MCF 10A (cell line): ENCODE measurements at regions of chr12 and their contacts with region 1.

Region 1: GRCh38 chr12:53746592-53747092 is 5.1 kb downstream of the CISTR start:
- DNase-seq: peak; percentile 83
- H3K4me3 Mint-ChIP-seq: no peak overlapping the region
- H3K27ac Mint-ChIP-seq: no peak overlapping the region
- H3K4me1 Mint-ChIP-seq: no peaks in the 10 kb centered on the region
- H3K27me3 Mint-ChIP-seq: no peaks in the 10 kb centered on the region
- CTCF ChIP-seq: peak; percentile 99

Region 2: DNA sequence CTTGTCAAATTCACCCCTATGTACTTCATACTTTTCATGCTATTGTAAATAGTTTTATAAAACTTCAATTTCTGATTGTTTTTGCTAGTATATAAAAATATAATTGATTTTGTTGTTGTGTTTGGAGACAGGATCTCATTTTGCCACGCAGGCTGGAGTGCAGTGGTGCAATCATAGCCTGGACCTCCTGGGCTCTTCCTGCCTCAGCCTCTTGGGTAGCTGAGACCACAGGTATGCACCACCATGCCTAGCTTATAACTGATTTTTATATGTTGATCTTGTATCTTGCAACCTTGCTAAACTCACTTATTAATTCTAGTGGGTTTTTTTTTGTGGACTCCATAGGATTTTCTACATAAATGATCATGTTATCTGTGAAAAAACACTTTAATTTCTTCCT is 94.3 kb before region 1 on chr12:
- CTCF ChIA-PET with region 1: no interaction called
- POLR2A ChIA-PET with region 1: no interaction called
- intact Hi-C with region 1: no loop called
- DNase-seq: no peak
- H3K4me3 Mint-ChIP-seq: no peak overlapping the region
- H3K27ac Mint-ChIP-seq: no peak overlapping the region
- H3K4me1 Mint-ChIP-seq: no peaks in the 10 kb centered on the region
- H3K27me3 Mint-ChIP-seq: no peaks in the 10 kb centered on the region
- CTCF ChIP-seq: no peak

Region 3: GRCh38 chr12:53686436-53686835 is 60.2 kb before region 1 on chr12:
- CTCF ChIA-PET with region 1: interaction called, 98 read pairs
- POLR2A ChIA-PET with region 1: interaction called, 4 read pairs
- intact Hi-C with region 1: no loop called
- DNase-seq: no peak
- H3K4me3 Mint-ChIP-seq: no peak overlapping the region
- H3K27ac Mint-ChIP-seq: no peak overlapping the region
- H3K4me1 Mint-ChIP-seq: no peaks in the 10 kb centered on the region
- H3K27me3 Mint-ChIP-seq: no peaks in the 10 kb centered on the region
- CTCF ChIP-seq: no peak

Region 4: DNA sequence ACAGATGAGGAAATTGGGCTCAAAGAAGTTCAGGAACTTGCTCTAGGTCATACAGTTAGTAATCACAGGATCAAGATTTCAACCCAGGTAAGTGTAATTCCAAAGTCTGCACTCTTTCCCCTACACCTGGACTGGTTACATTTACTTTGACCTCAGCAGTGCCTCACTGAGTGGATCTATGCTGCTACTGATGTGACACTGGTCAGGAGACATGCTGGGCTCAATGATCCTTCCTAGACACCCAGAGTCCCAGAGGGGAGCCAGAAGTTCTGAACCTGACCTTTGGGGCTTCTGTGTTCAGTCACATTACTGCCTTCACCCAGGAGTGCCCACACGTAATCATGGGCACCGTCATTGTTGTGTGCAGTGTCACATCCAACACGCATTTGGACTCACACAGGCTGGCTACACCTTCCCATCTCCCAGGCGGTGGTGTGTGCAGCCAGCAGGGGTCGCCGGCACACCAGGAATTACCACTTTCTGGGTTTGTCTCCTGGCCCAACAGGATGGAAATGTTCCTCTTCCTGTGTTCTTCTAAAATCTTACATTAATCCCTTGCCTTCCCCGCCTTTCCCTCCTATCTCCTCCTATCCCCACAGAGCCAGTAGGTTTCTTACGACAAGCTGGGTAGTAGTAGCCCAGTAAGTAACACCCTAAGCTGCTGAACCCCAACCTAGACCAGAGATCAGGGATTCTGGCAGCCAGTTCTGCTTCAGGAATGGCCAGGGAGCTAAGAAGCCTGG is 45.0 kb before region 1 on chr12:
- CTCF ChIA-PET with region 1: interaction called, 339 read pairs
- POLR2A ChIA-PET with region 1: interaction called, 6 read pairs
- intact Hi-C with region 1: loop called (anchors 1 kb)
- DNase-seq: peak; percentile 82
- H3K4me3 Mint-ChIP-seq: no peak overlapping the region
- H3K27ac Mint-ChIP-seq: no peak overlapping the region
- H3K4me1 Mint-ChIP-seq: peaks cover 5% of the 10 kb centered on the region
- H3K27me3 Mint-ChIP-seq: peaks cover 80% of the 10 kb centered on the region
- CTCF ChIP-seq: peak; percentile 95

Region 5: DNA sequence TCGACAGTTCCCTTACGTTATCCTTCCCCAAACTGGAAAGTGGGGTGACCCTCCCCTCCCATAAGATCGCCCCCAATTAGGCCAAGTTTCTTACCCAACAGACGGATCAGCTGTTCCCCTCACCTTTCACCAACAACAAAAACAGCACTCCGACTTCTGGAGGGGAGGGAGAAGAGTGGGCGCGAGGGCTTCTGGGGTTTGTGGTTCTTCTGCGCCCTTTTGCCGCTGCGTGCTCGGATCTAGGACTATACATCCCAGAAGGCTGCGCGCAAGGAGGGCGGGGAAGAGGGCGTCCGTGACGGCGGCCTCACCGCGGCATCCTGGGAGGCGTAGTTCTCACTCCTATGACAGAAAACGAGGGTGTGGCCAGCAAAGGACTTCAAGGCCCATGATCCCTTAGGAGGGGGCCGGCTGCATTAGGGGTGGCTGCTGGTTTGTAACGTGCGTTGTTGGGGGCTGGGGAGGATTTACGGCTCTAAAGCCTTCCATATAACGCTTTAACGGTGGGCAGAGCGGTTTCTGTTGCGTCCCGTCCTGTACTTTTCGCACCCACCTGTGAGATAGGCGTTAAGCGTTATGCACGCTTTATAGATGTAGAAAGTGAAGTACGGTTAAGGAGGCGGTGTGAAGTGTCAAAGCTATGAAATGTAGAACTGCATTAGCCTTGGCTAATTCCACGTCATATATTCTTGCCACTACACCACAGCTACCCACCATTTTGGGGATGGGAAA is 19.2 kb before region 1 on chr12 and contains the start of gene CALCOCO1:
- CTCF ChIA-PET with region 1: interaction called, 411 read pairs
- POLR2A ChIA-PET with region 1: interaction called, 11 read pairs
- intact Hi-C with region 1: no loop called
- DNase-seq: peak; percentile 98
- H3K4me3 Mint-ChIP-seq: peak within 1 kb of the TSS; percentile 95
- H3K27ac Mint-ChIP-seq: peak within 1 kb of the TSS; percentile 99
- H3K4me1 Mint-ChIP-seq: peaks cover 15% of the 10 kb centered on the region
- H3K27me3 Mint-ChIP-seq: no peaks in the 10 kb centered on the region
- CTCF ChIP-seq: no peak
- total RNA-seq, gene CALCOCO1: 49.4 and 74.6 TPM in 2 replicates

Region 6: GRCh38 chr12:53764615-53765014 is 18.0 kb after region 1 on chr12:
- CTCF ChIA-PET with region 1: interaction called, 28 read pairs
- POLR2A ChIA-PET with region 1: no interaction called
- intact Hi-C with region 1: no loop called
- DNase-seq: no peak
- H3K4me3 Mint-ChIP-seq: no peak overlapping the region
- H3K27ac Mint-ChIP-seq: no peak overlapping the region
- H3K4me1 Mint-ChIP-seq: peaks cover 17% of the 10 kb centered on the region
- H3K27me3 Mint-ChIP-seq: peaks cover 6% of the 10 kb centered on the region
- CTCF ChIP-seq: no peak

Region 7: GRCh38 chr12:53781228-53781801 is 34.7 kb after region 1 on chr12:
- CTCF ChIA-PET with region 1: interaction called, 20 read pairs
- POLR2A ChIA-PET with region 1: no interaction called
- intact Hi-C with region 1: no loop called
- DNase-seq: no peak
- H3K4me3 Mint-ChIP-seq: no peak overlapping the region
- H3K27ac Mint-ChIP-seq: peak overlapping the region; percentile 20
- H3K4me1 Mint-ChIP-seq: peaks cover 14% of the 10 kb centered on the region
- H3K27me3 Mint-ChIP-seq: no peaks in the 10 kb centered on the region
- CTCF ChIP-seq: no peak

Region 8: GRCh38 chr12:53984901-53985709 is 238.5 kb after region 1 on chr12 and contains the start of gene HOXC10:
- CTCF ChIA-PET with region 1: interaction called, 60 read pairs
- POLR2A ChIA-PET with region 1: no interaction called
- intact Hi-C with region 1: no loop called
- DNase-seq: peak; percentile 93
- H3K4me3 Mint-ChIP-seq: no peak within 1 kb of the TSS
- H3K27ac Mint-ChIP-seq: no peak within 1 kb of the TSS
- H3K4me1 Mint-ChIP-seq: peaks cover 20% of the 10 kb centered on the region
- H3K27me3 Mint-ChIP-seq: no peaks in the 10 kb centered on the region
- CTCF ChIP-seq: peak; percentile 64
- total RNA-seq, gene HOXC10: not detected in 2 replicates

Region 9: DNA sequence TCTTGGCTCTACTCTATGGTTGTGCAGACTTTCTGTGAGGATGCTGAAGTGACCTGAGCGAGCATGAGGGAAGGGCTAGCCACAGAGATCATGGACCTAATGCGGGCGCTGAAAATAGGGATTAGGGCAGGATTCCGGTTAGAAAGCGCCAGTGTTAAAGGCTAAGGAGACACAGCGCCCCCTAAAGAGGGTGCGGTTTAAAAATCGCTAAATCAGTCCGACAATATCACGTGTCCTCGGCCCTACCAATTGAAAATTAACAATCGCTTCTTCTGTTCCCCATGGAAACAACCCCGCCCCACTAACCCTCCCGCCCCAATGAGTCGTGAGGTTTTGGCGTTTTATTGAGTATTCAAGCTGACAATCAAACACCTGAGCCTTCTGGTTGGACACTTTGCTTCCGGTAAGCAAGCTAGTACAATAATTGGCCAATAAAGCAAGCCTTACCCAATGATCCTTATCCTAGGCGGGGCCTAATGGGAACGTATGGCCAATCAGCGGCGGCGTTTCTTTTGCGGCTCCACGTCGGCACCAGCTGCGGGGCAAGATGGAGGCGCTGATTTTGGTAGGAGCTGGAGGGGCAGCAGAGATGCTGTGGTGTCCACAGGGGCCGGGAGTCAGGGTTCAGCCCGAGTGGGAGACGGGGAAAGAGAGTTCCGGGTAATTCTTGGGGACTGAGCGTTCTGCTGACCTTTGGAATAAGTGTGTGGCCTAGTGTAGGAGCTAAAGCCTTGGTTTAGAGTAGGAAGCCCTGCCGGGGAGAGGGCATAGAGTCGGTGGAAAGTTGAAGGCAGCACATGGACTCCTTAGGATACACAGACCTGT is 578.2 kb after region 1 on chr12 and contains the start of gene COPZ1:
- CTCF ChIA-PET with region 1: no interaction called
- POLR2A ChIA-PET with region 1: no interaction called
- intact Hi-C with region 1: no loop called
- DNase-seq: peak; percentile 100
- H3K4me3 Mint-ChIP-seq: peak within 1 kb of the TSS; percentile 100
- H3K27ac Mint-ChIP-seq: peak within 1 kb of the TSS; percentile 100
- H3K4me1 Mint-ChIP-seq: peaks cover 19% of the 10 kb centered on the region
- H3K27me3 Mint-ChIP-seq: no peaks in the 10 kb centered on the region
- CTCF ChIP-seq: peak; percentile 77
- total RNA-seq, gene COPZ1: 207 and 299 TPM in 2 replicates